ENCODE measurements at regions of chr1 and their contacts with region 1.

Region 1: DNA sequence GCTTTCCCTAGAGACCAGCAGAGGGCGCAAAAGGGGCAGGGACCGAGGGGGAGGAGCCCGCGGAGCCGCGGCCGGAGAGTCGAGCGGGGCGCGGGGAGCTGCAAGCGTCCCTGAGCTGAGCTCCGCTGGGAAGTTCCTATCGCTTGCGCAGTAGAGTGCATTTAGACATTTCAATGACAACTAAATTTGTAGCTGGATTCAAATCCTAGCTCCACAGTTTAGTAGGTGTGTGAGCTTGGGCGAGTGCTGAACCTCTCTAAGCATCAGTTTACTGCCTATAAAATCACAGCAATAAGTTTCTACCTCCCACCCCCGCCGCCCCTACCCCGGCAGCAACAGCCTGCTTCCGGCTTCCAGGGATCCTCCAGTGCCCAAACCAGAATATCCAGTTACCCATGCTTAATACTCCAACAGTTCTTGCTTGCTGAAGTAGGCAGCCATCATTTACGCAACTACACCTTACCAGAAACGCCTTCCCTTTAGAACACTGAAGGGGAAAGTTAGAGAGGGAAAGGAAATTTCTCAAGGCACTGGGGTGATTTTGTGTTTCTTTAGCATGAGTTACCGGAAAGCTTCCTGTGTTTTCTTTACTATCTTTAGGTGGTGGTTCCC is 9.1 kb downstream of the TLR5 start:
- DNase-seq: peak; percentile 67 to 97 (median 84)

Region 2: DNA sequence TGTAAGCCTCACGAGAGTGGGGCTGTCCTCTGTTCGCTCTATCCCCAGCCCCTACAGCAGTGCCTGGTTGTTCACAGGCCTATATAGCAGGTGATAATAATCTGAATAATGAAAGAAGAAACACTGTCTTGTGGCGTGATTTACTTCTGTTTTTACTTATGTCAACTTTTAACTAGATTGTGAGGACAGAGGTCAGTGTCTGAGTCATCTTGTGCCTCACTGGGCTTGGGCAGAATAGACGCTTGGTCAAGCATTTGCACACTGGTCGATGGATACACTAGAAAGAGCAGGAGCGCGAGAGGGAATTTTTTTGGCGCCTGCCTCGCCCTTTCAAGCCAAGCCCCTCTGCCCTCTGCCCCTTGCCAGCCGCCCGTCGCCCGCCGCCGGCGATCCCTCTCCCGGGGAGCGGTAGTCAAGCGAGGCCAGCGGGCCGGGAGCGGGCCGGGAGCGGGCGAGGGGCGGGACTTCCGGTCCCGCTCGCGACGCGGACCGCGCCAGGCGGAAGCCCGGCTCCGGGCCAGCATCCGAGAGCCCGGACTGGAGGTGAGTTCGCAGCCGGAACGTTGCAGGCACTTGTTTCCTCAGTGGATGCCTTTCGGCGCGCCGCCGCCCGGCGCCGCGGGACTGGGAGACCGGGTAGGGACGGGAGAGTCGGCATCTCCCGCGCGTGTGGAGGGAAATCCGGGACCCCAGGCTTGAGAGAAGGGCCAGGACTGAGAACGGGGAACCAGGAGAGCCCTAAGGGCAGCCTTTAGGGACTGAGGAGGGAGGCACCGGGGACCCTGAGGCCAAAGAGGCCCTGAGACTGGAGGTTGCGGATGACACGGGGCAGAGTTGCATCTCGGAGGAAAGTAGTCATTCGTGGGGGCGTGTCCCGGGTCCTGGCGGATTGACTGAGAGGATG is 319.1 kb before region 1 on chr1 and contains the start of gene DISP1:
- intact Hi-C with region 1: no loop called
- DNase-seq: peak; percentile 56 to 96 (median 78)

Region 3: GRCh38 chr1:222994506-222995235 is 139.3 kb before region 1 on chr1:
- intact Hi-C with region 1: no loop called
- DNase-seq: no peak

Region 4: GRCh38 chr1:223244366-223245103 is 110.6 kb after region 1 on chr1:
- intact Hi-C with region 1: loop called (anchors 5 kb)
- DNase-seq: no peak

Region 5: GRCh38 chr1:223358826-223359225 is 224.9 kb after region 1 on chr1:
- intact Hi-C with region 1: loop called (anchors 10 kb)
- DNase-seq: no peak

Region 6: DNA sequence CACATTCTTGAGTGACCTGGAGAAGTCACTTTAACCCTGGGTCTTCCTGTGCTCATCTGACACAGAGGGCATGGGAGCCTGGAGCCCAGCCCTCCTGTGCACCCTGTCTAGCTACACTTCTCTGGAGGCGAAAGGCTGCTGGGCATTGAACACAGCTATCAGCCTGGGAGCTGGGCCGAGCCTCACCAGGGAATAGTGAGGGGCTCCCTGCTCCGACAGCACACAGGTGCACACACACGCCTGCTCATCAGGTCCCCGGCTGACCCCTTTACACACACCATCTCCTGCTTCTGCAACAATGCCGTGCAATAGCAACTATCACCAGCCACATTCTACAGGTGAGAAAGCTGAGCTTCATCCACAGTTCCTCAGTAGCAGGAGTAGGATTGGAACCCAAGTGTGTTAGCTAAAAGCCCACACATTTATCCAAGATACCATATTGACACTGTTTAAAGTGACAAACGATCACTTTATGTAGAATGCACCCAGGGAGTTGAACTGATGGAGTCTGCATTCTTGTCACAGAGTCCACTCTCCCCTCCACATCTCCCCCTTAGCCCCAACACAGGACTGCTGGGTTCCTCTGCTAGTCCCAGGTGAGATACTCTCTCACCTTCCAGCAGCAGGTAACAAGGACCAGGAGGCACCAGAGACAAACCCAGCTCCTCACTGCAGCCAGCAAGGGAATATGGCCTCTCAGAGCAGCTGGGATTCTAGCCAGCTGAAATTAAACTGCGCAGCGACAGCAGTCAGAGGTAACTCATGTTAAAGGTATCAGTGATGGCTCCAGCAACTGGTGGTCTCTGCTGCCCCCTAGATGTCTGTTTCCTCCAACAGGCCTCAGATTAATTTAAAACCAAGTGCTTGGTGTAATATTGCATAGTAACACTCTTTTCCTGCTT is 549.9 kb after region 1 on chr1:
- intact Hi-C with region 1: loop called (anchors 5 kb)
- DNase-seq: peak in 7 of 10 donors; percentile 38 to 88 (median 53)

Measured in posterior cingulate gyrus (tissue), 11 donors.